MCF 10A (cell line): ENCODE measurements at regions of chr7 and their contacts with region 1.

Region 1: GRCh38 chr7:80913582-80913981 is 5.3 kb downstream of the SEMA3C start:
- DNase-seq: no peak
- H3K4me3 Mint-ChIP-seq: peak overlapping the region; percentile 31
- H3K27ac Mint-ChIP-seq: no peak overlapping the region
- H3K4me1 Mint-ChIP-seq: peaks cover 46% of the 10 kb centered on the region
- H3K27me3 Mint-ChIP-seq: no peaks in the 10 kb centered on the region
- CTCF ChIP-seq: no peak

Region 2: GRCh38 chr7:80900583-80901576 is 12.7 kb before region 1 on chr7:
- CTCF ChIA-PET with region 1: interaction called, 6 read pairs
- POLR2A ChIA-PET with region 1: interaction called, 18 read pairs
- intact Hi-C with region 1: no loop called
- DNase-seq: peak; percentile 87
- H3K4me3 Mint-ChIP-seq: no peak overlapping the region
- H3K27ac Mint-ChIP-seq: peak overlapping the region; percentile 85
- H3K4me1 Mint-ChIP-seq: peaks cover 49% of the 10 kb centered on the region
- H3K27me3 Mint-ChIP-seq: no peaks in the 10 kb centered on the region
- CTCF ChIP-seq: no peak

Region 3: GRCh38 chr7:80967071-80967916 is 53.7 kb after region 1 on chr7:
- CTCF ChIA-PET with region 1: no interaction called
- POLR2A ChIA-PET with region 1: no interaction called
- intact Hi-C with region 1: no loop called
- DNase-seq: no peak
- H3K4me3 Mint-ChIP-seq: no peak overlapping the region
- H3K27ac Mint-ChIP-seq: no peak overlapping the region
- H3K4me1 Mint-ChIP-seq: no peaks in the 10 kb centered on the region
- H3K27me3 Mint-ChIP-seq: no peaks in the 10 kb centered on the region
- CTCF ChIP-seq: no peak

Region 4: GRCh38 chr7:81150951-81151361 is 237.4 kb after region 1 on chr7:
- CTCF ChIA-PET with region 1: no interaction called
- POLR2A ChIA-PET with region 1: no interaction called
- intact Hi-C with region 1: no loop called
- DNase-seq: no peak
- H3K4me3 Mint-ChIP-seq: no peak overlapping the region
- H3K27ac Mint-ChIP-seq: no peak overlapping the region
- H3K4me1 Mint-ChIP-seq: peaks cover 8% of the 10 kb centered on the region
- H3K27me3 Mint-ChIP-seq: no peaks in the 10 kb centered on the region
- CTCF ChIP-seq: no peak

Region 5: DNA sequence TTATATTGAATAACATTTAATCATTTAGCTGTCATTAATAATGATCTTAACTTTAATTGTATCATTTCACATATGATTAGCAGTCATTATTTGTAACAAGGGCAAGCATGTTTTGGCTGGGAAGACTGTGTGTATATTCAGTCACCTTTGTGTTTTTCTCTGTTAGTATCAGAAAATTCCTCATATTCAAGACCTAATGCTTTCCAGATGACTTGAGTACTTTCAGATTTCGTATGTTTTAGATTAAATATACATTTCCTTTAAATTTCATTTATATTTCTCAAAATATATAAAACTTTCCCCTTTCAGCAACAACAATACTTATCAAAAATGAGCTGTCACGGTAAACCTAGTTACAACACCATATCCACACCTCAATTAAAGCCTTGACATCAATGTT is 1536.3 kb after region 1 on chr7:
- CTCF ChIA-PET with region 1: no interaction called
- POLR2A ChIA-PET with region 1: no interaction called
- intact Hi-C with region 1: no loop called
- DNase-seq: no peak
- H3K4me3 Mint-ChIP-seq: no peak overlapping the region
- H3K27ac Mint-ChIP-seq: no peak overlapping the region
- H3K4me1 Mint-ChIP-seq: no peaks in the 10 kb centered on the region
- H3K27me3 Mint-ChIP-seq: peaks cover 76% of the 10 kb centered on the region
- CTCF ChIP-seq: no peak